ENCODE measurements at regions of chr1 and their contacts with region 1.

Region 1: DNA sequence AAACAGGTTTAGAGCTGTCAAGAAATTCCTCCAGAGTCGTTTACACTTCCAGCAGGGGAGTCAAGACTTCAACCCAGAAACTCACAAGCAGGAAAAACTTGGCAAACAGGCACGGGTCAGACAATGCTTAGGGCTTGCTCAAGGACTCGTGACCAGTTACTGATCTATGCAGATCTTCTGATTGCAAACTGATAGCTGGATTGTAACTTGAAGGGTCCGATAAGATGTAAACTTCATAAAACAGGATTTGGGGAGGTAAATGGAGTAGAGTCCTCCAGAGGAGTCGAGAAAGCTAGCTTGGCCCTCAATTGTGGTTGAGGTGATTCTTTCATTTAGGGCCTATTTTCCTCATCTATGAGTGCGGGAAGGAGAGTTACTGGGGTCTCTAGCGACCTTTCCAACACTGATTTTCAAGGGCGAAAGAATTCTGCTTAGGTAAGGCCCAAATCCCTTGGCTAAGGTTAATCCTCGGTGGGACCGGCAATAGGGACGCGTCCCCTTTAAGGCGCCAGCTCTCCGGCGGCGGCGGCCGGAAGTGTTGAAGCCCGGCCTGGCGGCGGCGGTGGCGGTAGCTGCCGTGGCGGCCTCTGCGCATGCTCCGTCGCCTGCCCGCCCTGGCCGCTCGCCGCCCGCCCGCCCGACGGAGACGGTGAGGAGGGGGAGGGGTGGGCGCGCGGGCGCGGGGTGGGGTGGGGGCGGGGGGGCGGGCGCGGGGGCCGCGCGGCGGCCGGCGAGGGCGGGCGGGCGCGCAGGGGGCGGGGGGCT is at the start of gene GMEB1:
- DNase-seq: peak; percentile 100

Region 2: GRCh38 chr1:28560886-28561285 is 107.5 kb before region 1 on chr1:
- CTCF ChIA-PET with region 1: no interaction called
- POLR2A ChIA-PET with region 1: no interaction called
- DNase-seq: no peak

Region 3: GRCh38 chr1:28642847-28643635 is 25.3 kb before region 1 on chr1 and contains the start of gene TAF12:
- CTCF ChIA-PET with region 1: no interaction called
- POLR2A ChIA-PET with region 1: interaction called, 25 read pairs
- DNase-seq: peak; percentile 98

Region 4: GRCh38 chr1:28656335-28656734 is 12.0 kb before region 1 on chr1:
- CTCF ChIA-PET with region 1: no interaction called
- POLR2A ChIA-PET with region 1: interaction called, 10 read pairs
- DNase-seq: no peak

Region 5: GRCh38 chr1:28703629-28704028 is 35.3 kb after region 1 on chr1:
- CTCF ChIA-PET with region 1: no interaction called
- POLR2A ChIA-PET with region 1: no interaction called
- DNase-seq: no peak

Region 6: GRCh38 chr1:28865997-28866650 is 197.8 kb after region 1 on chr1:
- CTCF ChIA-PET with region 1: no interaction called
- POLR2A ChIA-PET with region 1: no interaction called
- DNase-seq: no peak

Measured in HEK293T (cell line).